Activated naive CD4-positive, alpha-beta T cell treated with anti-CD3 and anti-CD28 coated beads for 36 hours (primary cell): ENCODE measurements at regions of chr15 and their contacts with region 1.

Region 1: GRCh38 chr15:70679919-70680231 is 83.5 kb downstream of the UACA start:
- DNase-seq: no peak
- H3K4me3 Mint-ChIP-seq: no peak overlapping the region
- H3K27ac Mint-ChIP-seq: no peak overlapping the region
- H3K4me1 Mint-ChIP-seq: peaks cover 2% of the 10 kb centered on the region
- H3K27me3 Mint-ChIP-seq: peaks cover 5% of the 10 kb centered on the region

Region 2: GRCh38 chr15:70722266-70723121 is 42.6 kb after region 1 on chr15:
- CTCF ChIA-PET with region 1: interaction called, 52 read pairs
- intact Hi-C with region 1: loop called (anchors 1 kb)
- DNase-seq: no peak
- H3K4me3 Mint-ChIP-seq: no peak overlapping the region
- H3K27ac Mint-ChIP-seq: no peak overlapping the region
- H3K4me1 Mint-ChIP-seq: no peaks in the 10 kb centered on the region
- H3K27me3 Mint-ChIP-seq: peaks cover 2% of the 10 kb centered on the region

Region 3: DNA sequence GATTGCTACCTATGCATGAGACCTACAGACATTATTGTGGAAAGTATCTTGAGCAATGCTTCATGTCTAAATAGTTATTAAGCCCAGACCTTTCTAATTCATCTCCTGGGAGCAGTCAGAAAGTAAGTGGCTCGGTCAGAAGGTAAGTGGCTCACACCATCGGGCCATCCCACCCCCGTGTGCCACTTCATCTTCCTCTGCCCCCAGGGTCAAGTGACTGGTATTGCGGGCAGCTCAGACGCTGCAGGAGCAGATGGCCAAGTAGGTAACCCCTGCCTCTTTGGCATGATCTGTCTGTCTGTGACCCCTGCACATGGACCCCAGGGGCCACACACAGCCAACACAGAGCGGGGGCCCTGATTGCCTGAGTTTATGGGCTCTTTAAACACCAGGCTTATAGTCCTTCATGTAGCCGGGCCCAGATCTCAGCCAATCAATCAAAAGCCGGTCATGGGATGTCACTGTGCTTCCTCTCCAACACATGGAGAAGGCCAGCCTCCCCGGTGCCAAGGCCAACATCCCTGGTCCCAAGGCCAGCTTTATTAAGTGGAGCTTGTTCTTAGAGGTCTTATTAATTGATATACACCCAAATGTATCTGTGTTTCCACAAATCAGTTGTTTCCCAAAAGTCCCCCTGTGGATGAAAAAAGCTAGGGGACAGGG is 131.2 kb after region 1 on chr15:
- CTCF ChIA-PET with region 1: interaction called, 15 read pairs
- intact Hi-C with region 1: loop called (anchors 1 kb)
- DNase-seq: no peak
- H3K4me3 Mint-ChIP-seq: no peak overlapping the region
- H3K27ac Mint-ChIP-seq: no peak overlapping the region
- H3K4me1 Mint-ChIP-seq: no peaks in the 10 kb centered on the region
- H3K27me3 Mint-ChIP-seq: no peaks in the 10 kb centered on the region